ENCODE measurements at regions of chr3 and their contacts with region 1.

Region 1: DNA sequence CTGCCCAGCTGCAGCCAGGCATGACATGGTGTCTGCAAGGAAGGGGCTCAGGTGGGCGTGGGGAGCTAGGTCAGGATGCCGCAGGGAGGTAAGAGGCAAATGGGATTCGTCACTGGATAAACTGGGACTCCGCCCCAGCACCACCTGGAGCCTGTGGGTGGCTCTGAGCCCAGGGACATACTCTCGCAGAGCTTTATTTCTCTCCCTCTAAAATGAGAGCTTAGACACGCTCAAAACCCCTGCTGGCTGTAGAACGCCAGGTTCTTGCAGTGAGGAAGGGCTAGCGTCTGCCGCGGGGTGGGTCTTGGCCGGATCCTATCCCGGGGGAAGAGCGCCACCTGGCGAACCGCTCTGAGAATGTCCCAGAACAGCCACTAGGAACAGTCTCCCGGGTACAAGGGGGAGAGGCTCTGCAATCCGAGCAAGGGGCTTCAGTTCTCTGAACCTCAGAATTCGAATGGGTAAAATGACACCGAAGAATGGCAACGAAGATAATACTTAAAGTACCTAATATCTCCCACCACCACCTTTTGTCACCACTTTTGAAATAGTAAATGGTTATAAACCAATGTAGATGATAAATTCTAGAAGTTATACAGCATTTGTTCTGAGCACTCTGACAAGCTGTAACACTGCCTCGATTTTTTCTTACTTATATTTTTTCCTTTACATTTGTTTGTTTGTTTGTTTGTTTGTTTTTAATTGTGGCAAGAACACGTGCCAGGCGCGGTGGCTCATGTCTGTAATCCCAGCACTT is 53.2 kb upstream of the SRGAP3 start:
- DNase-seq: peak; percentile 74
- H3K4me3 ChIP-seq: no peak overlapping the region
- H3K27ac ChIP-seq: no peak overlapping the region
- H3K4me1 ChIP-seq: no peaks in the 10 kb centered on the region
- CTCF ChIP-seq: peak; percentile 95

Region 2: DNA sequence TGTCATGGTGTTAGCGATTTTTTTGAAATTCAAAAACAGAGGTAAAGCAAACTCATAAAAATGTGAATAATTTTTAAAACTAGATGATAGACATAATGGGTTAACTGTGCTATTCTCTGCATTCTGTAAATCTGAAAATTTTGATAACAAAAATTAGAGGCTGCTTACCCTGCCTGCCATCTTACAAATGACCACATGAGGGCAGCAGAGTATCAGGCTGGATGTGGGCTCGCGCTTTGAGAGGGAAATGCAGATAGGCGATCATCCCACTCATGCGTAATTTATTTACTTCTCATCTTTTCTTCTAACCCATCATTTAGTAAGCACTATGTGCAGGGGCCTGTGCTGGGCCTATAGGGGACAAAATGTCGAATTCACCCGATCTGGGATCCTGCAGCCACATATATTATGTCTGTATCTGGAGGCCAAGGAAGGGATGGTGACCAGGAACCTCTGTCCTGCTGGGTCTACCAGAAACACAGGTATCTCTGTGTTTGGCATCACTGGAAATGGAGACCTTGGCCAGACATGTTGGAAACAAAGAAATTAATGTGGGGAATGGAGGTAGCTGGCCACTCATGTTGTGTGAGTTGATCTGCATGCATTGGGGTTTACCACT is 331.5 kb before region 1 on chr3:
- CTCF ChIA-PET with region 1: interaction called, 3 read pairs
- POLR2A ChIA-PET with region 1: interaction called, 3 read pairs
- intact Hi-C with region 1: loop called (anchors 1 kb)
- DNase-seq: peak; percentile 62
- H3K4me3 ChIP-seq: no peak overlapping the region
- H3K27ac ChIP-seq: no peak overlapping the region
- H3K4me1 ChIP-seq: no peaks in the 10 kb centered on the region
- CTCF ChIP-seq: peak; percentile 99

Region 3: GRCh38 chr3:8987645-8988383 is 314.8 kb before region 1 on chr3:
- CTCF ChIA-PET with region 1: interaction called, 5 read pairs
- POLR2A ChIA-PET with region 1: no interaction called
- intact Hi-C with region 1: loop called (anchors 1 kb)
- DNase-seq: peak; percentile 56
- H3K4me3 ChIP-seq: no peak overlapping the region
- H3K27ac ChIP-seq: no peak overlapping the region
- H3K4me1 ChIP-seq: no peaks in the 10 kb centered on the region
- CTCF ChIP-seq: peak; percentile 83

Region 4: DNA sequence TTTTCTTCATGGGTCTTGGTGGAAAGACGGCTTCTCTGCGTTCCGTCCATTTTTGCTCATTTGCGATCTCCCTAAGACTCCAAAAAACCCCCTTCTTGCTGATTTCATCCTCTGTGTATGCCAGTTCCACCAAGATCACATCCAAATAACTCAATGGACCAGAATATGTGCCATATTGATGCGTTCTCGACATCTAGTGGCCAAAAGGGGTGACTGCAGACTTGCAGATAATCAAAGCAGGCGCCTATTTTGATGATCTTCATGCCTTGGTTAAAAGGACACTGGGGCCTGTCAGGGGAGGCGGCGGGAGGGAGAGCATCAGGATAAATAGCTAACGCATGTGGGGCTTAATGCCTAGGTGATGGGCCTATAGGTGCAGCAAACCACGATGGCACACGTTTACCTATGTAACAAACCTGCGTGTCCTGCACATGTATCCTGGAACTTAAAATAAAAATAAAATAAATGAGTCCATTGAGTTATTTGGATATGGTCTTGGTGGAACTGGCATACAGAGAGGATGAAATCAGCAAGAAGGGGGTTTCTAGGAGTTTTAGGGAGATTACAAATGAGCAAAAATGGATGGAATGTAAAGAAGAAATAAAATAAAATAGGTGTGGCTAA is 235.1 kb before region 1 on chr3:
- CTCF ChIA-PET with region 1: no interaction called
- POLR2A ChIA-PET with region 1: no interaction called
- intact Hi-C with region 1: loop called (anchors 2 kb)
- DNase-seq: peak; percentile 52
- H3K4me3 ChIP-seq: no peak overlapping the region
- H3K27ac ChIP-seq: no peak overlapping the region
- H3K4me1 ChIP-seq: no peaks in the 10 kb centered on the region
- CTCF ChIP-seq: peak; percentile 91

Measured in OCI-LY7 (cell line).